Transverse colon (tissue), 4 donors: ENCODE measurements at regions of chr4 and their contacts with region 1.

Region 1: GRCh38 chr4:75995727-75996126 is 5.0 kb upstream of the SDAD1 start:
- DNase-seq: no peak
- H3K4me3 ChIP-seq: no peak overlapping the region
- H3K27ac ChIP-seq: no peak overlapping the region
- H3K4me1 ChIP-seq: peaks cover 0 to 13% (median 1%) of the 10 kb centered on the region in 4 donors
- H3K27me3 ChIP-seq: no peaks in the 10 kb centered on the region
- CTCF ChIP-seq: peak; percentile 64 to 75 (median 70)
- EP300 ChIP-seq: no peak
- POLR2A ChIP-seq: no peak

Region 2: GRCh38 chr4:76074468-76074867 is 78.7 kb after region 1 on chr4 and contains the start of gene ART3:
- in situ Hi-C with region 1: loop called (anchors 5 kb)
- intact Hi-C with region 1: loop called (anchors 5 kb)
- DNase-seq: no peak
- H3K4me3 ChIP-seq: no peak within 1 kb of the TSS
- H3K27ac ChIP-seq: peak within 1 kb of the TSS in 1 of 4 donors; percentile 34
- H3K4me1 ChIP-seq: no peaks in the 10 kb centered on the region
- H3K27me3 ChIP-seq: no peaks in the 10 kb centered on the region
- CTCF ChIP-seq: no peak
- EP300 ChIP-seq: no peak
- POLR2A ChIP-seq: no peak
- total RNA-seq, gene ART3: 0.68 to 4.4 TPM in 2 of 4 donors, not detected in the others